Activated CD4-positive, alpha-beta T cell treated with anti-CD3 and anti-CD28 coated beads for 36 hours (primary cell): ENCODE measurements at regions of chr20 and their contacts with region 1.

Region 1: GRCh38 chr20:24176661-24177060 is 188.1 kb upstream of the GGTLC1 start:
- DNase-seq: no peak
- ATAC-seq: no peak
- H3K4me3 Mint-ChIP-seq: no peak overlapping the region
- H3K27ac Mint-ChIP-seq: no peak overlapping the region
- H3K4me1 Mint-ChIP-seq: no peaks in the 10 kb centered on the region
- H3K27me3 Mint-ChIP-seq: peaks cover 6% of the 10 kb centered on the region

Region 2: DNA sequence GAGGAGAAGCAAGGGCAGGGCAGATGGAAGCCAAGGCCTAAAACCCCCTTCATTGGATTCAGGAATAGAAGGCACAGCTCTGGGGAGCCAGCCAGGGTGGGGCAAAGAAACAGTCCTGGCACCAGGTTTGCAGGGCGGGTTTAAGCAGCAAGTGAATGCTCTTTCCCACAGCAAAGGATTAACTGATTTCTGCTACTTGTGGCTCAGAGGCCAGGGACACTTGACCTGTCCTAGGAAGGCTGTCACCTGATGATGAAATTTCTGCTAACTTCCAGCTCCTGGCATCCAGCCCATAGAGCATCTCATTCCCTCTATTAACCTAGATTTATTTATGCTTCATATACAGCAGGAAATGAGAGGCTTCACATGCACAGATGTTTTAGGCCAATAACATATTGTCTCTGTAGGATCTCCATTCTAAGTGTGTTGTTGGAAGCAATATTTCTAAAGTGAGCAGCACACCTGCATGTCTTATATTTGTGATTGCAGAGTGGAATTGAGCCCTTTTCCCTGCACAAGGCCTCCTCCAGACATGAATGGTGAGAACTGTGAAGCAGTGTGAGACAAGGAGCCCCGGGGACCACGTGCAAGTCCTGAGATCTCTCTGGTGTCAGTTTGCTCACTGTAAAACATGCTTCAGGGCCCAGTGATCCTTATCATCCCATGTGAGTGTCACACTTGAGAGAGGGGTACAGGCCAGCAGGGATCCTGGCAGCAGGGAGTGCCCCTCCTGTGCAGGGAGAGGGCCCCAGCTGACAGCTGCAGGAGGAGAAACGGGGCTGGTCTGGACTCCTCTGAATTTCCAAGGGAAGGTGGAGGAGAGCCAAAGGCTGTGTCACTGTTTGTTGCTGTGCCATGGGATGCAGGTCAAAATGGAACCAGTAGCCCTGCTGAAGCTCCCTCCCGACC is 256.0 kb before region 1 on chr20:
- CTCF ChIA-PET with region 1: no interaction called
- POLR2A ChIA-PET with region 1: no interaction called
- intact Hi-C with region 1: no loop called
- DNase-seq: no peak
- ATAC-seq: no peak
- H3K4me3 Mint-ChIP-seq: no peak overlapping the region
- H3K27ac Mint-ChIP-seq: no peak overlapping the region
- H3K4me1 Mint-ChIP-seq: peaks cover 42% of the 10 kb centered on the region
- H3K27me3 Mint-ChIP-seq: no peaks in the 10 kb centered on the region

Region 3: GRCh38 chr20:24194137-24194536 is 17.5 kb after region 1 on chr20:
- CTCF ChIA-PET with region 1: no interaction called
- POLR2A ChIA-PET with region 1: no interaction called
- intact Hi-C with region 1: loop called in 1 of 2 experiments (anchors 2 kb)
- DNase-seq: no peak
- ATAC-seq: no peak
- H3K4me3 Mint-ChIP-seq: no peak overlapping the region
- H3K27ac Mint-ChIP-seq: no peak overlapping the region
- H3K4me1 Mint-ChIP-seq: no peaks in the 10 kb centered on the region
- H3K27me3 Mint-ChIP-seq: peaks cover 3% of the 10 kb centered on the region